Spleen (tissue), 13 donors: ENCODE measurements at regions of chr3 and their contacts with region 1.

Region 1: GRCh38 chr3:188954590-188955208 is 217.1 kb upstream of the TPRG1 start:
- DNase-seq: peak; percentile 93
- H3K4me3 ChIP-seq: no peak overlapping the region
- H3K27ac ChIP-seq: no peak overlapping the region
- H3K4me1 ChIP-seq: peaks cover 0 to 32% (median 12%) of the 10 kb centered on the region in 6 donors
- H3K27me3 ChIP-seq: peaks cover 0 to 4% (median 0%) of the 10 kb centered on the region in 7 donors
- CTCF ChIP-seq: peak; percentile 82 to 96 (median 94)
- POLR2A ChIP-seq: no peak

Region 2: GRCh38 chr3:187738331-187739093 is 1216.2 kb before region 1 on chr3:
- intact Hi-C with region 1: loop called (anchors 2 kb)
- DNase-seq: peak; percentile 92
- H3K4me3 ChIP-seq: peak overlapping the region; percentile 51 to 84 (median 64)
- H3K27ac ChIP-seq: peak overlapping the region; percentile 79 to 99 (median 99)
- H3K4me1 ChIP-seq: peaks cover 12 to 92% (median 64%) of the 10 kb centered on the region in 6 donors
- H3K27me3 ChIP-seq: no peaks in the 10 kb centered on the region
- CTCF ChIP-seq: peak; percentile 56 to 85 (median 77)
- POLR2A ChIP-seq: no peak

Region 3: DNA sequence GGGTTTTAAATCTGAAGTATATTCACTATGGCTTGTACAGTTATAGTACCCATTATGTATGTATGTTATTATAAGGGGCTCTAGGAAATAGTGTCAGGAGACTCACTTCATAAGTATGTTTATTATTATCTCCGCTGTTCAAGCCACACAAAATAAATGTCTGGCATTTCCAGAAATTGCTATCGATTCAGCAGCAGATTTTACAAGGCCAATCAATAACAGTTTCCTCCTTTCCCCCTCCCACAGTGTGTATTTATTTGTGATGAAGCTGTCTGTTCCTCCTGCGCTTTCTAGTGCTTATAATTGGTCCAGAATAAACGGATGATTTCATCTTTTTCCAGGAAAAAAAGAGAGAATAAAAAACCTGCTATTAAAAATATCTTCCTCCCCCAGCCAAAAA is 935.0 kb before region 1 on chr3:
- intact Hi-C with region 1: no loop called
- DNase-seq: no peak
- H3K4me3 ChIP-seq: no peak overlapping the region
- H3K27ac ChIP-seq: no peak overlapping the region
- H3K4me1 ChIP-seq: no peaks in the 10 kb centered on the region
- H3K27me3 ChIP-seq: no peaks in the 10 kb centered on the region
- CTCF ChIP-seq: no peak
- POLR2A ChIP-seq: no peak

Region 4: DNA sequence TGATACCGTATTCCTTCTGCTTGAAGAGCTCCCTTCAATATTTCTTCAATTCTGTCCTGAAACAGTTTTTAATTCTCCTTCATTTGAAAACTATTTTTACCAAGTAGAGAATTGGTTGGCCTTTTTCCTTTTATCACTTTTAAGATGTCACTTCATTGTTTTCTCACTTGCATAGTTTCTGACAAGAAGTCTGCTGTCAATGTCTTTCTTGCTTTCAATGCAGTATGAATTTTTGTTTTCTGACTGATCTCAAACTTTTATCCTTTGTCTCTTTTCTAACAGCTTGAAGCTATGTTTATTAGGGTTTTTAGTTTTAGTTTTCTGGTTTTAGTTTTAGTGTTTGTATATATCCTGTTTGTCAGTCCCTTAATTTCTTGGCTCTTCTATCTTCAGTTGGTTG is 147.7 kb before region 1 on chr3:
- intact Hi-C with region 1: no loop called
- DNase-seq: no peak
- H3K4me3 ChIP-seq: no peak overlapping the region
- H3K27ac ChIP-seq: no peak overlapping the region
- H3K4me1 ChIP-seq: no peaks in the 10 kb centered on the region
- H3K27me3 ChIP-seq: no peaks in the 10 kb centered on the region
- CTCF ChIP-seq: no peak
- POLR2A ChIP-seq: no peak

Region 5: GRCh38 chr3:189148081-189148507 is 193.4 kb after region 1 on chr3:
- intact Hi-C with region 1: loop called (anchors 5 kb)
- DNase-seq: no peak
- H3K4me3 ChIP-seq: no peak overlapping the region
- H3K27ac ChIP-seq: no peak overlapping the region
- H3K4me1 ChIP-seq: peaks cover 0 to 33% (median 5%) of the 10 kb centered on the region in 6 donors
- H3K27me3 ChIP-seq: peaks cover 0 to 5% (median 0%) of the 10 kb centered on the region in 7 donors
- CTCF ChIP-seq: peak; percentile 51 to 84 (median 73)
- POLR2A ChIP-seq: no peak